ENCODE measurements at regions of chr3 and their contacts with region 1.

Region 1: GRCh38 chr3:46558184-46559043 is 7.7 kb downstream of the LRRC2 start:
- DNase-seq: peak; percentile 80 to 89
- ATAC-seq: peak; percentile 99 to 100
- H3K4me3 ChIP-seq: peak overlapping the region; percentile 60
- H3K27ac ChIP-seq: peak overlapping the region; percentile 70 to 80
- H3K4me1 ChIP-seq: peaks cover 3% of the 10 kb centered on the region; the same call in 1 of the 3 replicates
- CTCF ChIP-seq: peak; percentile 72
- EP300 ChIP-seq: no peak
- POLR2A ChIP-seq: peak; percentile 45
- RAD21 ChIP-seq: peak; percentile 79 to 86

Region 2: GRCh38 chr3:46496741-46497554 is 61.5 kb before region 1 on chr3:
- CTCF ChIA-PET with region 1: interaction called, 14 read pairs
- POLR2A ChIA-PET with region 1: no interaction called
- DNase-seq: peak in 1 of 2 experiments; percentile 6
- ATAC-seq: 0 out of 6 replicates have a peak, but pooled peaks of 1 of the 2 experiments have one; percentile 46
- H3K4me3 ChIP-seq: no peak overlapping the region
- H3K27ac ChIP-seq: no peak overlapping the region
- H3K4me1 ChIP-seq: no peaks in the 10 kb centered on the region
- CTCF ChIP-seq: peak; percentile 16; the same call in 2 of the 3 replicates
- EP300 ChIP-seq: no peak
- POLR2A ChIP-seq: no peak
- RAD21 ChIP-seq: no peak

Region 3: GRCh38 chr3:46935168-46935858 is 376.9 kb after region 1 on chr3:
- CTCF ChIA-PET with region 1: no interaction called
- POLR2A ChIA-PET with region 1: no interaction called
- DNase-seq: peak; percentile 80 to 83
- ATAC-seq: peak; percentile 91 to 92
- H3K4me3 ChIP-seq: 0 out of 3 replicates have a peak overlapping the region, but pooled peaks have one; percentile 6
- H3K27ac ChIP-seq: peak overlapping the region; percentile 85 to 88
- H3K4me1 ChIP-seq: peaks cover 83% of the 10 kb centered on the region
- CTCF ChIP-seq: peak; percentile 34; the same call in 2 of the 3 replicates
- EP300 ChIP-seq: no peak
- POLR2A ChIP-seq: no peak
- RAD21 ChIP-seq: peak; percentile 14 to 15; a peak in 2 of 5 replicates

Measured in A549 (cell line).